GM12878 (cell line): ENCODE measurements at regions of chr7 and their contacts with region 1.

Region 1: DNA sequence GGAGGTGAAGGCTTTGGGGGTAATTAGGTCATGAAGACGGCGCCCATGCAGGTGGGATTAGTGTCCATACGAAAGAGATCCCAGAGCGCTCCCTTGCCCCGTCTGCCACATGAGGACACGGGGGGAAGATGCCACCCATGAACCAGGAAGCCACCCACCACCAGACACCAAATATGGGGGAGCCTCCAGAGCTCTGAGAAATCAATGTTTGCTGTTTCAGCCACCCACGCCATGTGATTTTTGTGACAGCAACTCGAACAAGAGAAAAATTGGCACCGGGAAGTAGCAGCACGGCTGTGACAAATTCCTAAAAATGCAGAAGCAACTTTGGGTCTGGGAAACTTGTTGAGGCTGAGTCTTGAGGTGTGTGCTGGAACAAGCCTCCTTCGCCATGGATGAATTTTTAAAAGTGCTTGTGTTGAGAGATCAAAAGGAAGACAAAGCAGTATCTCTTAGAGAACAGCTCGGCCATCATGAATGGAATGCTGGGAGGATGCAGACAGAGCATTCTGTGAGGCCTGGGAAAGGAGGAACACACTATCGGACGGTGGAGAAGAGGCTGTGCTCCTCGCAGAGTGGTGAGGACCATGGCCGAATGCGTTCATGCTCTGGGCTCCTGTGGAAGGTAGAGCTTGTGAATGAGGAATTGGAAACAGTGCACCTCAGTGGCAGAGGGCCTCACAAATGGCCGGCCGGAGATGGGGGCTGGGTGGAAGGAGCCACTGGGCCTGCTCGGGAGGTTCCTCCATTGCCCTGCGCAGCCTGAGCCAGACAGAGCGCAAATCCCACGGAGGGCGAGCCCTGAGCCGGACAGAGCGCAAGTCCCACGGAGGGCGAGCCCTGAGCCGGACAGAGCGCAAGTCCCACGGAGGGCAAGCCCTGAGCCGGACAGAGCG is 277.5 kb downstream of the PTPRN2 start:
- DNase-seq: no peak
- ATAC-seq: no peak
- H3K4me3 ChIP-seq: no peak overlapping the region
- H3K27ac ChIP-seq: no peak overlapping the region
- H3K4me1 ChIP-seq: no peaks in the 10 kb centered on the region
- H3K27me3 ChIP-seq: no peaks in the 10 kb centered on the region
- CTCF ChIP-seq: no peak
- EP300 ChIP-seq: no peak
- POLR2A ChIP-seq: no peak
- RAD21 ChIP-seq: no peak

Region 2: DNA sequence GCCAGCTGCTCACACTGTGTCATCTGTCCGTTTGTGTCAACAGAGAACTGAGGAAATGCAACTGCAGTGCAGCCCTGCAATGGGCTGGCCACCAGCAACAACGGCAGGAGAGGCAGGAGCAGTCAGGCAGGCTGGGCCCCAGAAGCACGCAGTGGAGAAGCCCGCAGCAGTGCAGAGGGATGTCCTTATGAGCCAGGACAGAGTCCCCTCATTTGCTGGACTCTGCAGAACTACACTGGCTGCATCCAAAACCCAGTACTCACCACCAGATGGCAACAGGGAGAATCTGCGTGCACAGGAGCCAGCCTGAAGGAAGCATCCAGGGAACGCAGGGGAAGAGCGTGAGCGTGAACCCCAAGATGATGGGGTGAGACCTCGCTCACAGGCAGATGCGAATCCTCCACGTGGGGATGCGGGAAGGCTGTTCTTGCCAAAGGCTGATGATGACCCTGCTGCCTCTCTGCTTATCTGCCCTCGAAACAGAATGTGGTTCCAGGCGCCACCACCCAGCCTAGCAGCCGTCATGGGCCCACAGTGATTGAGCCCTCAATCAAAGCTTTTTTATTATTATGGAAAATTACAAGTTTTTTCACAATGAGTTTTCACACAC is 45.4 kb after region 1 on chr7:
- CTCF ChIA-PET with region 1: no interaction called
- POLR2A ChIA-PET with region 1: no interaction called
- RAD21 ChIA-PET with region 1: no interaction called
- SMC1A ChIA-PET with region 1: no interaction called
- in situ Hi-C with region 1: loop called (anchors 5 kb)
- intact Hi-C with region 1: no loop called
- DNase-seq: no peak
- ATAC-seq: no peak
- H3K4me3 ChIP-seq: no peak overlapping the region
- H3K27ac ChIP-seq: no peak overlapping the region
- H3K4me1 ChIP-seq: no peaks in the 10 kb centered on the region
- H3K27me3 ChIP-seq: no peaks in the 10 kb centered on the region
- CTCF ChIP-seq: no peak
- EP300 ChIP-seq: no peak
- POLR2A ChIP-seq: no peak
- RAD21 ChIP-seq: no peak

Region 3: GRCh38 chr7:158450476-158451124 is 140.5 kb after region 1 on chr7:
- CTCF ChIA-PET with region 1: no interaction called
- POLR2A ChIA-PET with region 1: no interaction called
- RAD21 ChIA-PET with region 1: no interaction called
- SMC1A ChIA-PET with region 1: no interaction called
- in situ Hi-C with region 1: no loop called
- intact Hi-C with region 1: no loop called
- DNase-seq: no peak
- ATAC-seq: no peak
- H3K4me3 ChIP-seq: no peak overlapping the region
- H3K27ac ChIP-seq: no peak overlapping the region
- H3K4me1 ChIP-seq: no peaks in the 10 kb centered on the region
- H3K27me3 ChIP-seq: no peaks in the 10 kb centered on the region
- CTCF ChIP-seq: no peak
- EP300 ChIP-seq: no peak
- POLR2A ChIP-seq: no peak
- RAD21 ChIP-seq: no peak